ENCODE measurements at regions of chr6 and their contacts with region 1.

Region 1: DNA sequence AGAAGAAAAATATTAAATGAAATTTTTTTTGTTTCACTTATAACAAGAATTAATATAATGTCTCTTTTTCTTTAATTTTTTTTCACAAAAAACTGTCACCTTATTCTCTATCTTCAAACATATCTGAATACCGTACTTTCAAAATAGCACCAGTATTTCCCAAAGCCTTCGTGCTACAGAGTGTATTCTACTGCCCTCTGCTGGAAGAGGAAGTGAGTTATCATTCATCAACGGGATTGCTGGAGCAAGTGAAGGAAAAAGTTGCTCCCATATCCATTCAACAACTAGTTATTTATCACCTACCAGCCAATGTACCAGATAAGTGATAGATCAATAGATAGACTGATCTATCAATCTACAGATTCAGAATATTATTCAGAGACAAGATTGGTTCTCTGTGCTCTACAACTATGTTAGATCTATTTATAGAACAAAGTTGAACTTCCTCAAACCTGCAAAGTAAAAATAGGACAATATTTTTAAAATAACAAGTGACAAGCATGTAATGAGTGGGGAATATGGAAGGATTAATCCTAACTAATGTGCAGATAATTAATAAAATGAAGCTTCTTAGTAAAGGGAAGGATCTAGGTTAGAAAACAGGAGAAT is 26.7 kb upstream of the TFAP2B start:
- DNase-seq: peak in 1 of 2 experiments; percentile 1
- H3K4me3 ChIP-seq: no peak overlapping the region
- H3K27ac ChIP-seq: no peak overlapping the region
- H3K4me1 ChIP-seq: no peaks in the 10 kb centered on the region
- H3K27me3 ChIP-seq: no peaks in the 10 kb centered on the region
- CTCF ChIP-seq: peak; percentile 72

Region 2: DNA sequence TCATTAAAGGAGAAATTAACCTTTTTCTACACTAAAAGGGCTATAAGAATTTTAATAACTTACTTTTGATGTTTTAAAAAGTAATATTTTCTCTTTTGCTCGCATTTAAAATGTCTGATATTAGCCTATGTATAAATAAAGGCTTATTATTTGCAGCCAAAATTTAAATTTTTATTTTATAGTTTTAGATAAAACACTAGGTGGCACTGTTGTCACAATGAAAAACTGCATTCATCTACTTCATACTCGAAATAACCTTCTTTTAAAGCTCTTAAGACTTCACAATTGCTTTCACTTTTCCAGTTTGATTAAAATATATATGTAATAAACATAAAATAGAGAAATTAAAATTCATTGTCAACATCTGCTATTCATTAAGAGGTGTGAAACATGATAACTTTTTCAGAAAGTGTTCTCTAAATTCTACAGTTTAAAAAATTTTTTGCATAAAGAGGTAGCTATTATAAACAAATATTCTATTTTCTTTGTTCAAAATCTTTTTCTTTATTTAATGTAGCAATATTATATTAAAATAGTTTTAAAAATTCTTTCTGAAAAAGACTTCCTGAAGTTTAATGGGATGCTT is 663.5 kb before region 1 on chr6:
- CTCF ChIA-PET with region 1: no interaction called
- POLR2A ChIA-PET with region 1: no interaction called
- intact Hi-C with region 1: loop called (anchors 5 kb)
- DNase-seq: no peak
- H3K4me3 ChIP-seq: no peak overlapping the region
- H3K27ac ChIP-seq: no peak overlapping the region
- H3K4me1 ChIP-seq: no peaks in the 10 kb centered on the region
- H3K27me3 ChIP-seq: no peaks in the 10 kb centered on the region
- CTCF ChIP-seq: peak; percentile 79

Region 3: DNA sequence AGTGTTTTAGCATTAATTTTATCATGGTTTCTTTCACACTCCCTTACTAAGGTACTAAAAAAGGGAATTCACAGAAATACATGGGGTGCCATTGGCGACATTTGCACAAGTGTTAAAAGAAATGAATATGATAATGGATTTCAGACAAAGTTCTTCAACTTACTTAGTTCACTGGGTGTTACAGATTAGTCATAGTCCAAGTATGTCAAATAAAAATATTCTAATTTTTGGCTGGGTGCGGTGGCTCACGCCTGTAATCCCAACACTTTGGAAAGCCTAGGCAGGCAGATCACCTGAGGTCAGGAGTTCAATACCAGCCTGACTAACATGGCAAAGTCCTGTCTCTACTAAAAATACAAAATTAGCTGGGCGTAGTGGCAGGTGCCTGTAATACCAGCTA is 364.7 kb before region 1 on chr6:
- CTCF ChIA-PET with region 1: no interaction called
- POLR2A ChIA-PET with region 1: no interaction called
- intact Hi-C with region 1: no loop called
- DNase-seq: no peak
- H3K4me3 ChIP-seq: no peak overlapping the region
- H3K27ac ChIP-seq: no peak overlapping the region
- H3K4me1 ChIP-seq: no peaks in the 10 kb centered on the region
- H3K27me3 ChIP-seq: no peaks in the 10 kb centered on the region
- CTCF ChIP-seq: no peak

Region 4: DNA sequence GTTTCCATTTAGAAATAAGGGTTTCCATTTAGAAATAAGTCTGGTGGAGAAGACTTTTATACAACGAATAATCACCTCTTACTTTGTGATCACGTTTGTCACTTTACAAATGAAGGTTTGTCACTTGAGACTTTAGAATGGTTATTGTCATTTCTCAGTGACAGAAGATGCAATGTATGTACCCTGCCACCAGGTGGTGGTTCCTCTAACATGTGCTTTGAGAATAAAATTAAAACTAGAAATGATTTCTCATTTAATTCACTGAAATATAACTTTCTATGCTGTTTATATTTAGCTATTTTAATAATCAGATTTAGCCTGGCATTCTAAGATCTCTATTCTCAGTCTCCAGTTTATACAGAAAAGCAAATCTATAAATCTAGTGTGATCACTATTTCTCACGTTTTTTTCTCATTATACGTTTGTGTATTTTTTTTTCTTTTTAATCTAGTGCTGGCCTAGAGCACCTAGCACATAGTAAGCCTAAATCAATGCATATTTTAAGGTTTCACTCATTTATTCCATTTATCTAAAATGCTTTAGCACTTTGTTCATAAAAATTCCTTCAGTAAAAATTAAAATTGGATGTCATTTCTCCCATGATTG is 136.1 kb before region 1 on chr6:
- CTCF ChIA-PET with region 1: no interaction called
- POLR2A ChIA-PET with region 1: no interaction called
- intact Hi-C with region 1: loop called (anchors 2 kb)
- DNase-seq: no peak
- H3K4me3 ChIP-seq: no peak overlapping the region
- H3K27ac ChIP-seq: no peak overlapping the region
- H3K4me1 ChIP-seq: no peaks in the 10 kb centered on the region
- H3K27me3 ChIP-seq: no peaks in the 10 kb centered on the region
- CTCF ChIP-seq: peak; percentile 74